ENCODE measurements at regions of chr1 and their contacts with region 1.

Region 1: GRCh38 chr1:205791568-205792180 is 16.4 kb upstream of the RAB29 start:
- DNase-seq: peak; percentile 76

Region 2: GRCh38 chr1:205668951-205669340 is 122.7 kb before region 1 on chr1:
- CTCF ChIA-PET with region 1: no interaction called
- POLR2A ChIA-PET with region 1: no interaction called
- DNase-seq: no peak

Region 3: GRCh38 chr1:205729945-205730610 is 61.6 kb before region 1 on chr1:
- CTCF ChIA-PET with region 1: no interaction called
- POLR2A ChIA-PET with region 1: no interaction called
- DNase-seq: no peak

Region 4: GRCh38 chr1:205805082-205805712 is 13.5 kb after region 1 on chr1:
- CTCF ChIA-PET with region 1: interaction called, 11 read pairs
- POLR2A ChIA-PET with region 1: no interaction called
- DNase-seq: no peak

Region 5: GRCh38 chr1:205812271-205812877 is 20.7 kb after region 1 on chr1:
- CTCF ChIA-PET with region 1: interaction called, 11 read pairs
- POLR2A ChIA-PET with region 1: no interaction called
- DNase-seq: peak; percentile 60

Region 6: DNA sequence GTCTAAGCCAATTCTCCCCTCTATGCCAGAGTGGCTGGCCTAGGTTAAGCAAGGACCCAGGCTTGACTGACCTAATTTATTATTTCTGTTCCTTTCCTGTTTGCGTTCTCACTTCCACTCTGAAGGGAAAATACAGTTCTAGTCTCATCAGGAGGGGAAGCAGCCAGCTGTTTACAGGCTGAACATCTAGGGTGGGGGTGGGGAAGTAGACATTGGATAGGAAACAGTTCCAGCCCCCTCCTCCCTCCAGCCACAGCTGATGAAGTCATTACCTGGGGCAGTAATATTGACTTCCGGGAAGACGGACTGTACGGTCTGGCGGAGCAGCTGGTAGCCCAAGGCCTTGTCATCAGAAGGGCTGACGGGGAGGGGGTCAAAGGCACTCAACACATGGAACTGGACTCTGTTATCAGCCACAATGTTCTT is 40.7 kb after region 1 on chr1:
- CTCF ChIA-PET with region 1: no interaction called
- POLR2A ChIA-PET with region 1: no interaction called
- DNase-seq: no peak

Region 7: DNA sequence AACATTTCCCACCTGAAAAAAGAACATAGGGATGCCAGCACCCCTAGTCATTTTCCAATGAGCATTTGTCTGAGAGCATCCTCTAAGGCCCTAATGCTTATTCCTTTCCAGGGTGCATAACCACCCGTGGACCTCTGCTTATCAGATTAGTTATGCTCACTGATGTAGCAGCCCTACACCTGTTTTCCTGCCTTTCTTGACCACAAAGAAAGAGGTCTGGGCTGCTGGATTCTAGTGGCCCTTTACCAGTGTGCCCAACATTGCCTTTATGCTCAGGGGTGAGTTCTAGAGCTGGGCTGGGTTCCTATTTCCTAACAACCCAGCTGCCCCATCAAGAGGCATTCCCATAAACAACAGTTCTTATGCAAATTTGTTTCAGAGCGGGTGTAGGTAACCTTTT is 78.6 kb after region 1 on chr1:
- CTCF ChIA-PET with region 1: no interaction called
- POLR2A ChIA-PET with region 1: no interaction called
- DNase-seq: no peak

Region 8: GRCh38 chr1:205907794-205908193 is 116.1 kb after region 1 on chr1:
- CTCF ChIA-PET with region 1: interaction called, 10 read pairs
- POLR2A ChIA-PET with region 1: no interaction called
- DNase-seq: peak; percentile 39

Region 9: DNA sequence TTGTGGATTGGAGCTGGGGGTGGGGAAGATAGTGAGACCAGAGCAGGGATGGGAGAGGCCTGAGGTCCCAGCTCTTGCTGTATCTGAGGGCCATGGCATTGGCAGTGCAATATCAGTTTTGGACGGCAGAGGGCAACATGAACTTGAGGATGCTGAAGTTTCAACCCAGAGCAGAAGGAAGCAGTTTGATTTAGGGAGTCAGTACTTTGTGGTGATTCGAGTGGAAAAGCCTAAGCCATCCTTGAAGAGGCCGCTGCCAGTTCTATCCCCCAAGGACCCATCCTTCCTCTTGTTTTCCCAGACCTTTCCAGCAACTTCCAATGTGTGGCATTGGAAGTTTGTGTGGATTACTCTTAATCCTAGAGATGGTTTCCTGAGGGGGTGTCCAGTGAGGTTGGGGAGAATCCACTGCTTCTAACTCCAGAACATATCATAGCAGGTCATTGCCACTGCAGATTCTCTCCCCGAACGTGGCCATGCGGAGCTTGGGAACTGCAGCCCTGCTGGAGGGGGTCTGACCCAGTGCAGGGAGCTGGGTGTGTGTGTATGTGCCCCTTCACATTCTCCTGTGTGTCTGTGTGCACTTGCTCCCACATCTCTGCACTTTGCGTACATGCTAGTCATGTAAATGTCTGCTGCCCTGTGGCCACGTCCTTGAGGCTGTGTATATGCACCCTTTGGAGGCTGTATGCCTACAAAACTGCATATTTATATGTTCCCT is 127.5 kb after region 1 on chr1:
- CTCF ChIA-PET with region 1: interaction called, 15 read pairs
- POLR2A ChIA-PET with region 1: no interaction called
- DNase-seq: peak; percentile 89

Measured in HEK293T (cell line).